ENCODE measurements at regions of chr1 and their contacts with region 1.

Region 1: GRCh38 chr1:154386643-154387352 is 18.3 kb upstream of the IL6R start:
- DNase-seq: no peak
- ATAC-seq: peak; percentile 36 to 57
- H3K4me3 ChIP-seq: no peak overlapping the region
- H3K27ac ChIP-seq: no peak overlapping the region
- H3K4me1 ChIP-seq: no peaks in the 10 kb centered on the region
- H3K27me3 ChIP-seq: no peaks in the 10 kb centered on the region

Region 2: GRCh38 chr1:154263465-154264332 is 123.1 kb before region 1 on chr1:
- intact Hi-C with region 1: no loop called
- DNase-seq: no peak
- ATAC-seq: peak in 1 of 2 donors; percentile 26
- H3K4me3 ChIP-seq: no peak overlapping the region
- H3K27ac ChIP-seq: no peak overlapping the region
- H3K4me1 ChIP-seq: no peaks in the 10 kb centered on the region
- H3K27me3 ChIP-seq: no peaks in the 10 kb centered on the region

Region 3: GRCh38 chr1:154442006-154442740 is 55.4 kb after region 1 on chr1:
- intact Hi-C with region 1: loop called in 1 of 4 experiments (anchors 10 kb)
- DNase-seq: peak in 2 of 3 donors; percentile 50 to 58
- ATAC-seq: peak; percentile 37 to 52
- H3K4me3 ChIP-seq: no peak overlapping the region
- H3K27ac ChIP-seq: no peak overlapping the region
- H3K4me1 ChIP-seq: no peaks in the 10 kb centered on the region
- H3K27me3 ChIP-seq: no peaks in the 10 kb centered on the region

Region 4: DNA sequence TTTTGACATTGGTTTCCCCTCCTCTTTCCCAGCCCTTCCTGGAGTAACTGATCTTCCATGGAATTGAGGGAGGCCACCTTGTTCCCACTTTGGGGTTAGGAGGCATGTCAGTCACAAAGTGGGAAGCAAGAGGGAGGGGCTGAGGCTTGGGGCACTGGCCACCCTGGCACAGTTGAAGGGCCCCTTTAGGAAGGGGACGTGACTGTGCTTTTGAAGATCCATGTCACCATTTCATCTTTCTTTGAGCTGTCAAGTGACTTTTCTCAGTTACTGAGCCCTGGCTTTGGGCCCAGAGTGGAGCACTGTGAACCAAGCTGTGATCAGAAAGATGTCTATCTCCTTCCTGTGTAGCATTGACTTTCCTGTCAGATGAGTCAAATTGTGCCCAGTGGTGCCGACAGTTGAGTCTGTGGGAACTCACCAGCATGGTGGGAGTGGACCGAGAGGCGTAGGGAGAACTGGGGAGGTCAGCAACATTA is 76.8 kb after region 1 on chr1:
- intact Hi-C with region 1: loop called in 1 of 4 experiments (anchors 10 kb)
- DNase-seq: no peak
- ATAC-seq: peak; percentile 22 to 59
- H3K4me3 ChIP-seq: no peak overlapping the region
- H3K27ac ChIP-seq: peak overlapping the region; percentile 30
- H3K4me1 ChIP-seq: peaks cover 7% of the 10 kb centered on the region
- H3K27me3 ChIP-seq: no peaks in the 10 kb centered on the region

Region 5: GRCh38 chr1:154501423-154502065 is 114.7 kb after region 1 on chr1:
- intact Hi-C with region 1: no loop called
- DNase-seq: peak; percentile 82 to 91 (median 91)
- ATAC-seq: peak; percentile 74 to 80
- H3K4me3 ChIP-seq: peak overlapping the region; percentile 53
- H3K27ac ChIP-seq: peak overlapping the region; percentile 56
- H3K4me1 ChIP-seq: no peaks in the 10 kb centered on the region
- H3K27me3 ChIP-seq: no peaks in the 10 kb centered on the region